BJ (cell line): ENCODE measurements at regions of chr1 and their contacts with region 1.

Region 1: GRCh38 chr1:44594871-44595746 is 79.2 kb downstream of the TMEM53 start:
- DNase-seq: no peak
- H3K4me3 ChIP-seq: no peak overlapping the region
- H3K27me3 ChIP-seq: peaks cover 13% of the 10 kb centered on the region
- CTCF ChIP-seq: peak; percentile 98

Region 2: GRCh38 chr1:44220001-44220733 is 374.9 kb before region 1 on chr1:
- CTCF ChIA-PET with region 1: interaction called, 39 read pairs
- POLR2A ChIA-PET with region 1: no interaction called
- DNase-seq: no peak
- H3K4me3 ChIP-seq: no peak overlapping the region
- H3K27me3 ChIP-seq: no peaks in the 10 kb centered on the region
- CTCF ChIP-seq: peak; percentile 13

Region 3: GRCh38 chr1:44377925-44378784 is 217.0 kb before region 1 on chr1:
- CTCF ChIA-PET with region 1: interaction called, 124 read pairs
- POLR2A ChIA-PET with region 1: no interaction called
- DNase-seq: no peak
- H3K4me3 ChIP-seq: no peak overlapping the region
- H3K27me3 ChIP-seq: peaks cover 13% of the 10 kb centered on the region
- CTCF ChIP-seq: peak; percentile 75

Region 4: GRCh38 chr1:44571712-44572571 is 23.2 kb before region 1 on chr1:
- CTCF ChIA-PET with region 1: interaction called, 18 read pairs
- POLR2A ChIA-PET with region 1: no interaction called
- DNase-seq: no peak
- H3K4me3 ChIP-seq: no peak overlapping the region
- H3K27me3 ChIP-seq: peaks cover 13% of the 10 kb centered on the region
- CTCF ChIP-seq: peak; percentile 38

Region 5: GRCh38 chr1:44609412-44609767 is 14.3 kb after region 1 on chr1:
- CTCF ChIA-PET with region 1: interaction called, 19 read pairs
- POLR2A ChIA-PET with region 1: no interaction called
- DNase-seq: no peak
- H3K4me3 ChIP-seq: no peak overlapping the region
- H3K27me3 ChIP-seq: peaks cover 3% of the 10 kb centered on the region; the same call in 1 of the 2 replicates
- CTCF ChIP-seq: peak; percentile 81

Region 6: DNA sequence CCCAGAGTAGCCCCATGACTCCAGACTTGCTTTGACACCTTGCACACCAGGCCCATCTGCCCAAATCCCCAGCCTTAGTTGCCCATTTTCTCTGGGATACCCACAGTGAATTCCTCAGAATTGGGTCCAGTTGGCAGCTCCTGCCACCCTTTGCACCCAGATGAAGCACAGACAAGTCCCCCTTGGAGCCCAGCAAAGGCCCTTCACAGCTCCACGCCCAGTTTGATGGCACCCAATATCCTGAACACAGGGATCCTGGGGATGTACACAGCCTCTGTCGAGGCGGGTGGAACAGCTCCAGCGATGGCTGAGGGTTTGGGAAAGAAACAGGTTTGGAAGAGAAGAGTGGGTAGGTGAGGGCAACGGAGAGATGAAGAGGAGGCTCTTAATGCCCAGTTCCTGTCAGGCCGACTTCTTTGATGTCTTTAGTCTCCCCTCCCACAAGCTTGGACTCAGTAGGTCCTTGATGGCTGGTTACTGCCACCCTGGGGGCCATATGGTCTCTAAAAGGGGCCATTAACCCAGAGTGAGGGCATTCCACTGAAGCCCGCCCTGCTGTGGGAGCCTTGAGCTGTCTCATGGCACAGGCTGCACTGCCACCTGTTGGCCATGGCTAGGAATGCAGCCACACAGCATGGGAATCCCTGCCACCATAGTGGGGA is 57.5 kb after region 1 on chr1:
- CTCF ChIA-PET with region 1: interaction called, 424 read pairs
- POLR2A ChIA-PET with region 1: no interaction called
- DNase-seq: no peak
- H3K4me3 ChIP-seq: no peak overlapping the region
- H3K27me3 ChIP-seq: no peaks in the 10 kb centered on the region
- CTCF ChIP-seq: peak; percentile 98